B cell (primary cell): ENCODE measurements at regions of chr9 and their contacts with region 1.

Region 1: DNA sequence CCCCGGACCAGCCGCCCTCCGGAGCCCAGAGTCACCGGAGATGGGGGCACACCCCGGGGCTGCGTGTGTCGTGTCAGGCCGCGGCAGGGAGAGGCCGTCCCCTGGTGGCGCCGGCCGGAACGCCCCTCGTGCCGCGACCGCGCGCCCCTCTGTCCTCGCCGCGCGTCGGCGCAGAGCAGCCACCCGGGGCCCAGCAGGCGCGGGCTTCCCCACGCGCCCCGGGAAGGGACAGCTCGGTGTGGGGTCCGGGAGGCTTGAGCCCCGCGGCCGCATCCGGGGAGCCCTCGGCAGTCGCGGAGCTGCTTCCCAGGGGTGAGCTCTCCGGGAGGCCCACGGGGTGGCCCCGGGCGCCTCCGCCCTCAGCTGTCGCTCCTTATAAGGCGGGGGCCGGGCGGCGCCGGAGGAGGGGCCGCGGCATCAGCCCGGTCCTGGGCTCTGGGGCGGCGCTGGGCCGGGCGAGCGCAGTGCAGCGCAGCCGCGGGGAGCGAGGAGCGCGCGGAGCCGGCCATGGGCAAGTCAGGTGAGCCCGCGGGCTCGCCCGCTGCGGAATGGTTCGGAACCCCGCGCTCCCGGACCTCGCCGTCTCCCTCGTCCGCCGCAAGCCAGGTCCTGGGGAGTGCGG is at the start of gene GLIPR2:
- DNase-seq: peak; percentile 86
- ATAC-seq: peak; percentile 99
- H3K4me3 ChIP-seq: peak within 1 kb of the TSS; percentile 47 to 79 (median 68)
- H3K4me3 Mint-ChIP-seq: peak within 1 kb of the TSS; percentile 96
- H3K27ac ChIP-seq: peak within 1 kb of the TSS; percentile 11 to 75
- H3K27ac Mint-ChIP-seq: peak within 1 kb of the TSS; percentile 93
- H3K4me1 ChIP-seq: peaks cover 38 to 39% of the 10 kb centered on the region in 2 donors
- H3K4me1 Mint-ChIP-seq: peaks cover 50% of the 10 kb centered on the region
- H3K27me3 ChIP-seq: no peaks in the 10 kb centered on the region
- H3K27me3 Mint-ChIP-seq: no peaks in the 10 kb centered on the region
- CTCF ChIP-seq: peak; percentile 17
- total RNA-seq, gene GLIPR2: 13.7 and 15.2 TPM in 2 replicates

Region 2: GRCh38 chr9:35923927-35924763 is 212.2 kb before region 1 on chr9:
- CTCF ChIA-PET with region 1: no interaction called
- POLR2A ChIA-PET with region 1: no interaction called
- intact Hi-C with region 1: no loop called
- DNase-seq: no peak
- ATAC-seq: no peak
- H3K4me3 ChIP-seq: no peak overlapping the region
- H3K4me3 Mint-ChIP-seq: no peak overlapping the region
- H3K27ac ChIP-seq: no peak overlapping the region
- H3K27ac Mint-ChIP-seq: no peak overlapping the region
- H3K4me1 ChIP-seq: no peaks in the 10 kb centered on the region
- H3K4me1 Mint-ChIP-seq: no peaks in the 10 kb centered on the region
- H3K27me3 ChIP-seq: peaks cover 0 to 12% (median 8%) of the 10 kb centered on the region in 4 experiments
- H3K27me3 Mint-ChIP-seq: peaks cover 31% of the 10 kb centered on the region
- CTCF ChIP-seq: no peak

Region 3: GRCh38 chr9:36148311-36149051 is 12.1 kb after region 1 on chr9:
- CTCF ChIA-PET with region 1: interaction called, 5 read pairs
- POLR2A ChIA-PET with region 1: interaction called, 4 read pairs
- intact Hi-C with region 1: loop called (anchors 1 kb)
- DNase-seq: no peak
- ATAC-seq: no peak
- H3K4me3 ChIP-seq: no peak overlapping the region
- H3K4me3 Mint-ChIP-seq: no peak overlapping the region
- H3K27ac ChIP-seq: no peak overlapping the region
- H3K27ac Mint-ChIP-seq: no peak overlapping the region
- H3K4me1 ChIP-seq: peaks cover 51 to 82% of the 10 kb centered on the region in 2 donors
- H3K4me1 Mint-ChIP-seq: peaks cover 76% of the 10 kb centered on the region
- H3K27me3 ChIP-seq: no peaks in the 10 kb centered on the region
- H3K27me3 Mint-ChIP-seq: no peaks in the 10 kb centered on the region
- CTCF ChIP-seq: no peak